IMR-90 (cell line): ENCODE measurements at regions of chr1 and their contacts with region 1.

Region 1: GRCh38 chr1:62271948-62272728 is 47.1 kb downstream of the KANK4 start:
- DNase-seq: no peak
- ATAC-seq: no peak
- H3K4me3 ChIP-seq: no peak overlapping the region
- H3K27ac ChIP-seq: no peak overlapping the region
- H3K4me1 ChIP-seq: no peaks in the 10 kb centered on the region
- H3K27me3 ChIP-seq: no peaks in the 10 kb centered on the region
- CTCF ChIP-seq: no peak
- POLR2A ChIP-seq: no peak
- RAD21 ChIP-seq: no peak

Region 2: DNA sequence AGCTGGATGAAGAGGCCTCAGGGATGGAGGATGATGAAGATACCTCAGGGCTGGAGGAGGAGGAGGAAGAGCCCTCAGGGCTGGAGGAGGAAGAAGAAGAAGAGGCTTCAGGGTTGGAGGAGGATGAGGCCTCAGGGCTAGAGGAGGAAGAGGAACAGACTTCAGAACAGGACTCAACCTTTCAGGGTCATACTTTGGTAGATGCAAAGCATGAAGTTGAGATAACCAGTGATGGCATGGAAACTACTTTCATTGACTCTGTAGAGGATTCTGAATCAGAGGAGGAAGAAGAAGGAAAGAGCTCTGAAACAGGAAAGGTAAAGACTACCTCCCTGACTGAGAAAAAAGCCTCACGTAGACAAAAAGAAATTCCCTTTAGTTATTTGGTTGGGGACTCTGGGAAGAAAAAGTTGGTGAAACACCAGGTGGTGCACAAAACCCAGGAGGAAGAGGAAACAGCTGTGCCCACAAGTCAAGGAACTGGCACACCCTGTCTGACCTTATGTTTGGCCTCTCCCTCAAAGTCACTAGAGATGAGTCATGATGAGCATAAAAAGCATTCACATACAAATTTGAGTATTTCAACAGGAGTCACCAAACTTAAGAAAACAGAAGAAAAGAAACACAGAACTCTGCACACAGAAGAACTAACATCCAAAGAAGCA is 62.1 kb before region 1 on chr1:
- CTCF ChIA-PET with region 1: no interaction called
- POLR2A ChIA-PET with region 1: no interaction called
- dilution Hi-C with region 1: no loop called
- in situ Hi-C with region 1: no loop called
- intact Hi-C with region 1: loop called (anchors 2 kb)
- DNase-seq: no peak
- ATAC-seq: no peak
- H3K4me3 ChIP-seq: no peak overlapping the region
- H3K27ac ChIP-seq: no peak overlapping the region
- H3K4me1 ChIP-seq: no peaks in the 10 kb centered on the region
- H3K27me3 ChIP-seq: no peaks in the 10 kb centered on the region
- CTCF ChIP-seq: no peak
- POLR2A ChIP-seq: no peak
- RAD21 ChIP-seq: no peak

Region 3: GRCh38 chr1:62407405-62408009 is 135.4 kb after region 1 on chr1:
- CTCF ChIA-PET with region 1: no interaction called
- POLR2A ChIA-PET with region 1: no interaction called
- dilution Hi-C with region 1: no loop called
- in situ Hi-C with region 1: no loop called
- intact Hi-C with region 1: no loop called
- DNase-seq: peak; percentile 55
- ATAC-seq: peak; percentile 89
- H3K4me3 ChIP-seq: no peak overlapping the region
- H3K27ac ChIP-seq: no peak overlapping the region
- H3K4me1 ChIP-seq: no peaks in the 10 kb centered on the region
- H3K27me3 ChIP-seq: peaks cover 8% of the 10 kb centered on the region
- CTCF ChIP-seq: peak; percentile 79
- POLR2A ChIP-seq: no peak
- RAD21 ChIP-seq: peak; percentile 81